Ascending aorta (tissue), 2 donors: ENCODE measurements at regions of chr5 and their contacts with region 1.

Region 1: DNA sequence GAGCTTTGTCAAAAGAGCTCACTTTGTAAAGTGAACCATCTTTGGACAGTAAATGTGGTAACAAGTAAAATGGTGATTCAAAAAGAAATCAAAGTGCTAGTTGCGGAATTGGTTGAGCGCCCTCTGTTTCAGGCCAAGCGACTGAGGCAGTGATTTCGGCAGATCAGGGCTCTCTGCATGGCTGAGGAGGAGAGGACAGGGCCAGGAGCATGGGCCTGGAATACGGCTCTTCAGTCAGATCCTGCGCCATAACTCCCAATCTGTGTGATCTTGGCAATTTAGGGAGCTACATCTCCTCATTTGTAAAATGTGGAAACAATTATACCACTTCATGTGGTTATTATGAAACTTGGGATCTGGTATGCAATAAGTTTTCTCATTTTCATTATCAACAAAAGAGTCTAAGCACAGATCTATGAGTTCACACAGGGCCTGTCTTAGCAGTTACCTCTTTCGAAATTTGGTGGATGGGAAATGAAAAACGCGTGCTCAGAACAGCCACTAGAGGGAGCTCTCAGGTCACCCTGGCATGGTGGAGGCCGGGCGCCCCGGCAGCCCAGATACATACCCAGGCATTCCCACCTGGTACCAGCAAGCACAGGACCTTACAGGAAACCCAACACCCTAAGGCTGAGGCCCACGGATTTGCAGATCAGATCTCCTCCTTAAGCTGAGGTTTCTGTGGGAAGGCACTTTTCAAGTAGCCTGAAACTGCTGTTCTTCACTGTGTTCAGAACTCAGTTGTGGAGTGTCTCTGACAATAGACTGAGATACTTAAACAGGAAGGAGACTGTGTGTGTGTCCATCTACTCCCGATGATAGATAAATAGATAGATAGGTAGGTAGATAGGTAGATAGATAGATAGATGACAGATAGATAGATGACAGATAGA is 303.7 kb downstream of the RAB3C start:
- DNase-seq: peak in 1 of 2 donors; percentile 82
- H3K4me3 ChIP-seq: no peak overlapping the region
- H3K27ac ChIP-seq: peak overlapping the region; percentile 61 to 75
- H3K4me1 ChIP-seq: peaks cover 0 to 7% of the 10 kb centered on the region in 2 donors
- H3K27me3 ChIP-seq: no peaks in the 10 kb centered on the region
- CTCF ChIP-seq: peak; percentile 81 to 96 (median 84)

Region 2: GRCh38 chr5:58849921-58850667 is 36.5 kb before region 1 on chr5:
- intact Hi-C with region 1: no loop called
- DNase-seq: no peak
- H3K4me3 ChIP-seq: no peak overlapping the region
- H3K27ac ChIP-seq: no peak overlapping the region
- H3K4me1 ChIP-seq: no peaks in the 10 kb centered on the region
- H3K27me3 ChIP-seq: no peaks in the 10 kb centered on the region
- CTCF ChIP-seq: peak in 1 of 3 experiments; percentile 51

Region 3: DNA sequence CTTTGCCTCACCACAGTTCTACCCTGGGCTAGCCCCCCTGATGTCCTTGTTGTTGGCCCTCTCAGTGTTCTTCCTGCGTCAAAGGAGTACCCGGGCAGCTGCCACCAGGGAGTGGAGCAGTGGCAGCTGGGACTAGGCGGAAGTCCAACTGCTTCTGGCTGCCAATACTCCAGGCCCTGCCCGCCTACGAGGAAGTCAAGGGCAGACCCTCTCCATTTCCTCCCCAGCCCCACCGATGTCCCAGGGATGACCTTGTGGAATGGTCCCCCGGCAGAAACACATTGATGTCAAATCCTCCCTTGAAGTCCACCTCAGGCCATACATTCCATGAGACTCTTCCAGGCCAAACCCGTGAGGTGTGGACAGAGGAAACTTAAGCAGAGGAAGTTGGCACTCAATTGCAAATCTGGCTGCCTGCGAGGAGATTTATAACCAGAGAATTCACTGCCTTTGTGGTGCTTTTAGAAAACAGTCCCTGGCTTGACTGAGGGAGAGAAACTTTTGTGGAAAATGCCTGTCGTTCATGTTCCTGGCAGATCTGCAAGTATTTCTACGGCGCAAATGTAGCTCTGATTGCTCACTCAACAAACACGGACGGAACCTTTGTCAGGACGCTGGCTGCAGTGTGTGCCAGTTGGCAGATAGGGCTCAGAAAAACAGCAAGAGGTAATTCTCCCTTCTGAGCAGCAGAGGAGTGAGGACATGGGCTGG is 36.1 kb after region 1 on chr5:
- intact Hi-C with region 1: loop called (anchors 1 kb)
- DNase-seq: peak; percentile 41 to 95
- H3K4me3 ChIP-seq: peak overlapping the region in 1 of 2 donors; percentile 47
- H3K27ac ChIP-seq: peak overlapping the region; percentile 94 to 97
- H3K4me1 ChIP-seq: peaks cover 15 to 59% of the 10 kb centered on the region in 2 donors
- H3K27me3 ChIP-seq: no peaks in the 10 kb centered on the region
- CTCF ChIP-seq: peak in 2 of 3 experiments; percentile 10 to 20

Region 4: DNA sequence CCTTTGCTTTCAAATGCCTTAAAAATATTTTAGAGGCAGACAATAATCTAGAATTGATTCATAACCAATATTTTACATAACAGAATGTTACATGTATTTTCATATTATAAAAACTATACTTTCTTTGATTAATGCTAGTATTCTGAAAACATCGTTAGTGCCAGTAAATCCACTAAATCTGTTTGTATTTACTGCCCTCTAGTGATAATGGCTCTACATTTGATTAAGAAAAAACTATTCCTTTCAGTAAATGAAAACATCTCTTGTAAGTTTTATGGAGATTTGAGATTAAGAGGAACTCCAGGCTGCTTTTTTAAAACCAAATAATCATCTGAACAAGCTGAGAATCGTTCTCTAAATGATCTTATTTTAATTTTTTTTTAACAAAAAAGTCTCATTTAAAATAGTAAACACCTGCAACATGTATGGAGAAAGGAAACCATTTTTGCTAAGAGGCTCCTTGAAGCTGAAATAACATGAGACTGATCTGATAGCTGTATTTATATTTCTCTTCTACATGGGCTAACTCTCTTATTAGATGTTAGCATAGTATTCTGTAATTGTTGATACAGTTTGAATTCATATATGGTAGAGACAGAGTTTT is 121.0 kb after region 1 on chr5:
- intact Hi-C with region 1: loop called (anchors 2 kb)
- DNase-seq: no peak
- H3K4me3 ChIP-seq: no peak overlapping the region
- H3K27ac ChIP-seq: no peak overlapping the region
- H3K4me1 ChIP-seq: no peaks in the 10 kb centered on the region
- H3K27me3 ChIP-seq: no peaks in the 10 kb centered on the region
- CTCF ChIP-seq: peak in 2 of 3 experiments; percentile 34 to 58

Region 5: GRCh38 chr5:59039296-59040023 is 152.9 kb after region 1 on chr5:
- intact Hi-C with region 1: loop called (anchors 10 kb)
- DNase-seq: peak; percentile 40 to 93
- H3K4me3 ChIP-seq: peak overlapping the region; percentile 78 to 80
- H3K27ac ChIP-seq: peak overlapping the region; percentile 51 to 82
- H3K4me1 ChIP-seq: peaks cover 0 to 22% of the 10 kb centered on the region in 2 donors
- H3K27me3 ChIP-seq: no peaks in the 10 kb centered on the region
- CTCF ChIP-seq: no peak

Region 6: DNA sequence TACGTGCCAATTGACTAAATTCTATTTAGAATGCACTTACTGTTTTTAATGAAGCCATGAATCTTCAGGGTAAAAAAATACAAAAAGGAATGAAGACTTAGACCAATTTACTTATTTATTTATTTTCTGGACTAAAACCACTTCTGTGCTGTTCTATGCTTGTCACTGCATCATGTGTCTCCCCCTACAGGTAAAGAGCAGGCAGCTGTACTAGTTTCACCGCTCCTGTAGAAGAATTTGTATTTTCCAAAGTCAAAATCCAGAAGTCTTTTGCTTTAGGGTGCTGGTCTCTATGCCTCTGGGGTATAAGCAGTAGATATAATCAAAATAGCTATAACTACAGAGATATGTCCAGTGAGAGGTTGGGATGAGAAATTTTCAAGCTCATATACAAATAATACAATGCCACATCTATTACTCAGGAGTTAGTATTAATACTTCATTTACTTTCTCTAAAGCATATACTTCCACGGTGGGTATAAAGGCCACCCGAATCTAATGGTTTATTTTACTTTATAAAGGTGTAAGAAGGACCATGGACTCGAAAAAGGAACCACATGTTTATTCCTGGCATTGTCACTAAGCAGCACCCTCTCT is 287.8 kb after region 1 on chr5:
- intact Hi-C with region 1: loop called (anchors 2 kb)
- DNase-seq: no peak
- H3K4me3 ChIP-seq: no peak overlapping the region
- H3K27ac ChIP-seq: no peak overlapping the region
- H3K4me1 ChIP-seq: no peaks in the 10 kb centered on the region
- H3K27me3 ChIP-seq: no peaks in the 10 kb centered on the region
- CTCF ChIP-seq: peak; percentile 59 to 69 (median 68)

Region 7: DNA sequence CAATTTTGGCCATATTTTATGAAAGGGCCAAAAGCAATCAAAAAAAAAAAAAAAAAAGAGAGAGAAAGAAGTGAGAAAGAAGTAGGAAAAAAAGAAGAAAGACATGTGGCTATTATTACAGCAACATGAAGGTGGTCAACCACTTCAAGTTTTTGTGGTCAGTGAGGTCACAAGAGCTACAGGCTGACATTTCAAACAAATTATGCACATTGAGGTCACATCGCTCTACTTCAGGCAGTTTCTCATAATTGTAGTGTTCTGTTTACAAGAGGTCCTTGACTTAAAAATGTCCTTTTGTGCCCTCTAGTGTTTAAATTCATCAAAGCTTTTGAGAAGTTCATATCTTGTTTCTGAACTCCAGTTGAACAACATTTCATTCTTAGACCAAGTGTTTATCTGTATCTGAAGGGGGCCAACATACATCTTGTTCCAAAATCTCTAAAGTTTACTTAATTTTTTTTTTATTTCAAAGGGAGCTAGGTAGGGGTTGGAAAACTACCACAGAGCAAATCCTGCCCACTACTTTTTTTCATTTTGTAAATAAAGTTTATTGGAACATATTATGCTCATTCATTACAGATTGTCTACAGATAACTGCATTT is 493.9 kb after region 1 on chr5:
- intact Hi-C with region 1: loop called (anchors 5 kb)
- DNase-seq: no peak
- H3K4me3 ChIP-seq: no peak overlapping the region
- H3K27ac ChIP-seq: no peak overlapping the region
- H3K4me1 ChIP-seq: no peaks in the 10 kb centered on the region
- H3K27me3 ChIP-seq: no peaks in the 10 kb centered on the region
- CTCF ChIP-seq: peak; percentile 33 to 57 (median 39)